CD14-positive monocyte (primary cell): ENCODE measurements at regions of chr2 and their contacts with region 1.

Region 1: GRCh38 chr2:230411570-230412370 is 4.2 kb upstream of the SP100 start:
- DNase-seq: peak; percentile 55 to 66 (median 56)
- H3K4me3 ChIP-seq: peak overlapping the region; percentile 85 to 89 (median 85)
- H3K4me3 Mint-ChIP-seq: peak overlapping the region; percentile 100
- H3K27ac ChIP-seq: peak overlapping the region; percentile 94 to 98
- H3K27ac Mint-ChIP-seq: peak overlapping the region; percentile 99 to 100 (median 99)
- H3K4me1 ChIP-seq: peaks cover 54 to 63% of the 10 kb centered on the region in 2 donors
- H3K4me1 Mint-ChIP-seq: peaks cover 59% of the 10 kb centered on the region
- H3K27me3 ChIP-seq: no peaks in the 10 kb centered on the region
- H3K27me3 Mint-ChIP-seq: peaks cover 0 to 2% (median 0%) of the 10 kb centered on the region in 3 donors
- CTCF ChIP-seq: no peak

Region 2: GRCh38 chr2:230219419-230220331 is 192.1 kb before region 1 on chr2 and contains the start of gene SP110:
- intact Hi-C with region 1: loop called (anchors 10 kb)
- DNase-seq: peak; percentile 73 to 85 (median 78)
- H3K4me3 ChIP-seq: peak within 1 kb of the TSS; percentile 80 to 99 (median 96)
- H3K4me3 Mint-ChIP-seq: peak within 1 kb of the TSS; percentile 97 to 99
- H3K27ac ChIP-seq: peak within 1 kb of the TSS; percentile 75 to 94
- H3K27ac Mint-ChIP-seq: peak within 1 kb of the TSS; percentile 96 to 99 (median 97)
- H3K4me1 ChIP-seq: peaks cover 41 to 64% of the 10 kb centered on the region in 2 donors
- H3K4me1 Mint-ChIP-seq: peaks cover 52% of the 10 kb centered on the region
- H3K27me3 ChIP-seq: no peaks in the 10 kb centered on the region
- H3K27me3 Mint-ChIP-seq: no peaks in the 10 kb centered on the region
- CTCF ChIP-seq: no peak
- polyA plus RNA-seq, gene SP110: 39.1 to 66.1 (median 65.5) TPM

Region 3: DNA sequence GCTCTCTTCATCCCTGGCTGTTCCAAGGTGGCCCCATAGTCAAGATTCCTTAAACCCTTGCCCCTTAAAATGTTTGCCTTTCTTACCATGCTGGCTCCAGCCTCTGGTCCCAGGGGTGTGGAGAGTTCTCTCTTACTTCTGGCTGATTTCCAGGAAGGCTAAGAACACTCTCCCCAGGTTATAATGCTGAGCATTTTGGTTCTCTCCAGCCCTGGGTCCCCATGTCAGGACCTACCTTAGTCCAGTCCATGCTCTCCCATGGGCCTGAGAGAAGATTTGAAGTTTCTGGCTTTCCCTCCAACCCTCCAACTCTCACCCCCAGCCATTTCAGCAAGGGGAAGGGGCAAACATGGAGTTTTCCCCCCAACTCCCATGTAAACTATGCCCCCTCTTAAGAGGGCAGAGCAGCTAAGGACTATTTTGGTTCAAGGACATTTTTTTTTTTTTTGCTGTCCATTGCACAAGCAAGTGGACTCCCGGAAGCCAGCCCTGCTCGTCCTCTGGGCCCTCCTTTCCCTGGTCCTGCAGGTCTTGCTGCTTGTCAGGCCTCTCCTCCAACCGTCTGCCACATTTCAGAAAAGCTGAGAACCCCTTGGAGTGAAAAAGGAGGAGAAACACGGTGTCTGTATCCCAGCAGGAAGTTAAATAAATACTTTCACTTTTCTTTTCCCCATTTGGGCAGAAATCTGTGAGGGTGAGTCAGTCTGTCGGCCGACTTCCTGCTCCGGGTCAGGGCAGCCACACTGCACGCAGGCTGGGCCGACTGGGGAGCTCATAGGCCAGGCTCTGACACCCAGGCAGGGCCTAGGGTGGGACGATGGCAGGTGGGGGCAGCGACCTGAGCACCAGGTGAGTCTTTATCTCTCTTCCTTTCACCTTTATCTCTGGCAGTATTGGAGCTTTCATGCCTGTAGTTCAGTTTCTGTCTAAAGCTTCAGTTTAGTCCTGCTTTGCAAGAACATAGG is 85.0 kb before region 1 on chr2 and contains the start of gene SP140L:
- intact Hi-C with region 1: loop called (anchors 5 kb)
- DNase-seq: peak; percentile 86 to 92 (median 89)
- H3K4me3 ChIP-seq: peak within 1 kb of the TSS; percentile 49 to 72 (median 55)
- H3K4me3 Mint-ChIP-seq: peak within 1 kb of the TSS; percentile 80 to 95
- H3K27ac ChIP-seq: peak within 1 kb of the TSS; percentile 96 to 99
- H3K27ac Mint-ChIP-seq: peak within 1 kb of the TSS; percentile 98 to 100 (median 99)
- H3K4me1 ChIP-seq: peaks cover 44 to 69% of the 10 kb centered on the region in 2 donors
- H3K4me1 Mint-ChIP-seq: peaks cover 65% of the 10 kb centered on the region
- H3K27me3 ChIP-seq: no peaks in the 10 kb centered on the region
- H3K27me3 Mint-ChIP-seq: peaks cover 0 to 8% (median 2%) of the 10 kb centered on the region in 3 donors
- CTCF ChIP-seq: no peak
- polyA plus RNA-seq, gene SP140L: 6.5 to 23.7 (median 8.5) TPM

Region 4: DNA sequence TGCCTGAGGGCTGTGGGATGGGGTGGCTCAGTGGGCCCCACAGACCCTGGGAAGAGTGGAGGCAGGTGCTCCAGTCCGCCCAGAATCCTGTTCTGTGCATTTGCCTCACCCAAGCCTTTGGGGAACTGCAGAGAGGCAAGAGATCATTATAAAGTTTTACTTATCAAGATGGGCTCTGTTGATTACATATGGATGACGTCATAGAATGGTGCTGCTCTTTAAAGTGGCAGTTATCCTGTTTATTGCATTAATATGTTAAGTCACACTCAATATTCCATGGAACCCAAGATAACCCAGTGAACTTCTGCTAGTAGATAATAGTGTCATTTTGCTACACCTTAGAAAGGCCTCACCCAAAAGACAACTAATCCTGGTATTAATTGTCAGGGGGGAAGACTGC is 40.8 kb before region 1 on chr2:
- intact Hi-C with region 1: no loop called
- DNase-seq: no peak
- H3K4me3 ChIP-seq: no peak overlapping the region
- H3K4me3 Mint-ChIP-seq: no peak overlapping the region
- H3K27ac ChIP-seq: peak overlapping the region in 1 of 2 donors; percentile 20
- H3K27ac Mint-ChIP-seq: no peak overlapping the region
- H3K4me1 ChIP-seq: peaks cover 0 to 4% of the 10 kb centered on the region in 2 donors
- H3K4me1 Mint-ChIP-seq: peaks cover 5% of the 10 kb centered on the region
- H3K27me3 ChIP-seq: no peaks in the 10 kb centered on the region
- H3K27me3 Mint-ChIP-seq: peaks cover 0 to 2% (median 0%) of the 10 kb centered on the region in 3 donors
- CTCF ChIP-seq: no peak

Region 5: DNA sequence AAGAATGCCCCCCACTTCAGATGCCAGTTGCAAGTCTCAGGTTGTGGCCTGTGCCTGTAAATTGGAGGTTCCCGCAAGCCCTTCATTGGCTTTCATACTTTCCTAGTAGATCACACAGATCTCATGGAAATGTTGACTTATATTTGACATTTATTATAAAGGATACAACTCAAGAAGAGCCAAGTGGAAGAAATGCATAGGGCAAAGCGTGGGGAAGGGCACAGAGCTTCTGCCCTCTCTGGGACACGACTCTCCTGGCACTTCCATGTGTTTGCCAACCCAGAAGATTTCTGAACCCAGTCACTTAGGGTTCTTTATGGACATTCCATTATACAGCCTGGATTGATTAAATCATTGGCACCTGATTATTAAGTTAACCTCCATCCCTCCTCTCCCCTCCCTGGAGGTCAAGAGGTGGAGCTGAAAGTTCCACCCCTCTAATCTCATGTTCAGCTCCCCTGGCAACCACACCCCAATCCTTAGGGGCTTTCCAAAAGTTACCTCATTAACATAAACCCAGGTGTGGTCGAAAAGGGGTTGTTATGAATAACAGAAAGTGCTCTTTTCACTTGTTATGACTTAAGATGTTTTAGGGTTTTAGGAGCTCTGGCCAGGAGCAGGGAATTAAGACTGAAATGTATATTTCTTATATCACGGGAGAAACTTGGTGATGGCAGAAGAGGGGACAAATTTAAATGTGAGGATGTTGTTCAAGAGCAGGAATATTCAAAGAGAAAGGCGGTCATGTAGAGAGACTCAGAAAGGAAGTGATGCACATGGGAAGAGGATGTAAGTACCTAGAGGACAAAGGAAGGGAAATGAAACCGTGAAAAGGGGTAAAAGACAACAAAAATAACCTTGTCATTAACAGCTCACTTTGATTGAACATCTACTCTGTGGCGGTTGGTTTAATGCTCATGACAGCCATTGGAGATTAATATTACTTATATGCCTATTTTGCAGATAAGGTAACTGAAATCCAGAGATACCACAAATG is 36.0 kb after region 1 on chr2:
- intact Hi-C with region 1: loop called in 1 of 2 experiments (anchors 5 kb)
- DNase-seq: peak; percentile 36 to 71 (median 68)
- H3K4me3 ChIP-seq: peak overlapping the region in 1 of 3 experiments; percentile 4
- H3K4me3 Mint-ChIP-seq: peak overlapping the region in 1 of 2 donors; percentile 51
- H3K27ac ChIP-seq: peak overlapping the region; percentile 37 to 81
- H3K27ac Mint-ChIP-seq: peak overlapping the region; percentile 48 to 93 (median 82)
- H3K4me1 ChIP-seq: peaks cover 20 to 22% of the 10 kb centered on the region in 2 donors
- H3K4me1 Mint-ChIP-seq: peaks cover 35% of the 10 kb centered on the region
- H3K27me3 ChIP-seq: no peaks in the 10 kb centered on the region
- H3K27me3 Mint-ChIP-seq: peaks cover 0 to 4% (median 1%) of the 10 kb centered on the region in 3 donors
- CTCF ChIP-seq: no peak

Region 6: DNA sequence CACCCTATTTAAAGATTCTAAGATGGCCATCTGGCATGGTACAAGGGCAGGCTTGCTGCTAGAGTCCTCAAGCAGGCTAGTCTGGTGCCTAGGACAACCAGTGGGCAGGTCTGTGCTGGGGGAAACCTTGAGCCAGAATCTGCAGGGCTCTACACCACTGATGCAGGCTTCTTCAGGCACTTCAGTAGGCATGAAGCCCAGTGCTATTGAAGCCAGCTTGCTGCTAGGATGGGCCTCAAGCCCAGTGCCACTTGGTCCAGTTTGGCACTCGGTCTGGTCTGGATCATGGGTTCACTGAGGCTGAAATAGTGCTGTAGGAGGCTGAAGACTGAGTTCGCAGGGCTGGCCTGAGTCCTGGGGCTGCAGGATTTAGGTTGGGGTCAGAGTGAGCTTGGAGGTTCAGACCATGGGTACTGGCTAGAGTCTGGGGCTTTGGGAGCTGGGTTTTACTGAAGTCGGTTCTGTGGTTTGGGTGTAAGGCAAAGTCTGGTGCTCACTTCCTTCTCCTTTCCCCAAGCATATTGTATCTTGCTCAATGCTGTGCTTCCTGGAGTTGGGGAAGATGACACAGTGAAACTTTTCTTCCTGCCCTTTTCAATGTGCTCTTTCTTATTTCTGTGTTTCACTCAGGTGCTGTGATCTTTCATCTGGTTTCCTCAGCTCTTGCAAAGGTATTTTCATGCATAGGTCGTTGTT is 45.5 kb after region 1 on chr2:
- intact Hi-C with region 1: loop called in 1 of 2 experiments (anchors 5 kb)
- DNase-seq: peak; percentile 76 to 90 (median 90)
- H3K4me3 ChIP-seq: peak overlapping the region in 2 of 3 experiments; percentile 11 to 52
- H3K4me3 Mint-ChIP-seq: peak overlapping the region; percentile 56 to 81
- H3K27ac ChIP-seq: peak overlapping the region; percentile 70 to 91
- H3K27ac Mint-ChIP-seq: peak overlapping the region; percentile 80 to 95 (median 91)
- H3K4me1 ChIP-seq: peaks cover 30 to 34% of the 10 kb centered on the region in 2 donors
- H3K4me1 Mint-ChIP-seq: peaks cover 48% of the 10 kb centered on the region
- H3K27me3 ChIP-seq: no peaks in the 10 kb centered on the region
- H3K27me3 Mint-ChIP-seq: peaks cover 0 to under 1% (median 0%) of the 10 kb centered on the region in 3 donors
- CTCF ChIP-seq: no peak

Region 7: GRCh38 chr2:230668184-230668938 is 256.6 kb after region 1 on chr2:
- intact Hi-C with region 1: loop called in 1 of 2 experiments (anchors 10 kb)
- DNase-seq: peak; percentile 80 to 94 (median 83)
- H3K4me3 ChIP-seq: peak overlapping the region in 1 of 3 experiments; percentile 51
- H3K4me3 Mint-ChIP-seq: peak overlapping the region; percentile 49 to 78
- H3K27ac ChIP-seq: peak overlapping the region; percentile 90 to 93
- H3K27ac Mint-ChIP-seq: peak overlapping the region; percentile 93 to 98 (median 96)
- H3K4me1 ChIP-seq: peaks cover 69 to 76% of the 10 kb centered on the region in 2 donors
- H3K4me1 Mint-ChIP-seq: peaks cover 79% of the 10 kb centered on the region
- H3K27me3 ChIP-seq: no peaks in the 10 kb centered on the region
- H3K27me3 Mint-ChIP-seq: peaks cover 2 to 7% (median 5%) of the 10 kb centered on the region in 3 donors
- CTCF ChIP-seq: no peak

Region 8: GRCh38 chr2:230798769-230799399 is 387.1 kb after region 1 on chr2:
- intact Hi-C with region 1: loop called in 1 of 2 experiments (anchors 5 kb)
- DNase-seq: peak; percentile 30 to 53 (median 44)
- H3K4me3 ChIP-seq: no peak overlapping the region
- H3K4me3 Mint-ChIP-seq: no peak overlapping the region
- H3K27ac ChIP-seq: peak overlapping the region in 1 of 2 donors; percentile 98
- H3K27ac Mint-ChIP-seq: peak overlapping the region in 1 of 7 donors; percentile 21
- H3K4me1 ChIP-seq: peaks cover 43 to 48% of the 10 kb centered on the region in 2 donors
- H3K4me1 Mint-ChIP-seq: peaks cover 27% of the 10 kb centered on the region
- H3K27me3 ChIP-seq: no peaks in the 10 kb centered on the region
- H3K27me3 Mint-ChIP-seq: peaks cover 0 to under 1% (median 0%) of the 10 kb centered on the region in 3 donors
- CTCF ChIP-seq: peak; percentile 80